Posterior vena cava (tissue), 2 donors: ENCODE measurements at regions of chr9 and their contacts with region 1.

Region 1: DNA sequence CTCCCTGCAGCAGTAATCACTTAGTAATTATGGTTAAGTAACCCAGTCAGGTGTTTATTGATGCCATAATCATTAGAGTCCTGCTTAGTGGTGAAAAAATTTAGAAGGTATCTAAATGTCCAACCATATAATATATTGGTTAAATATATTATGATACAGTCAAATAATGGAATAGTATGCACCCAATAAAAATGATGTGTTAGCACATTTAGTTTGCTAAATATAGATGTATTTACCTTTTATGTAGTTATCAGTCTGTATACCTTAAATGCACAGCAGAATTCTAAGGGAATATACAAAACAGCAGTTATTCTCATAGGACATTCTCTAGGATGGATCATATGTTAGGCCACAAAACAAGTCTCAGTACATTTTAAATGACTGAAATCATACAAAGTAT is 90.4 kb downstream of the PRKACG start:
- DNase-seq: no peak

Region 2: DNA sequence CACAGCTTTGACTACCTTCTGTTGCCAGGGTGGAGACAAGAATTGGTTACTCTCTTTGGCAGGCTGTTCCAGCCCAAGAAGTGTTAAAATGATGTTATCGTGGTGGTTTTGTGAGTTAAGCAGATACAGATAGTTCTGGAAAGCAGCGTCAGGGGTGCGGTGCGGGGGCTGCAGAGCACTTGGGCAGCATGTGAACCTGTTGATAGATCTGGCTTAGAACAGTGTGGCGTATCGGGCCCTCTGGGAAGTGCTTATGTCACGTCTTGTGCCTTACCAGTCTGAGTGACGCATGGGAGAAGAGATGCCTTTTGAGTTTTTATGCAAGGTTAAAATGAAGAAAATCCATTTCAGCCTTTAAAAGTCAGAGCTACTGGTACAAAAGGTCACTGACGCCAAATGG is 62.0 kb before region 1 on chr9:
- intact Hi-C with region 1: loop called in 1 of 2 experiments (anchors 2 kb)
- DNase-seq: no peak